GM10248 (cell line): ENCODE measurements at regions of chr12 and their contacts with region 1.

Region 1: DNA sequence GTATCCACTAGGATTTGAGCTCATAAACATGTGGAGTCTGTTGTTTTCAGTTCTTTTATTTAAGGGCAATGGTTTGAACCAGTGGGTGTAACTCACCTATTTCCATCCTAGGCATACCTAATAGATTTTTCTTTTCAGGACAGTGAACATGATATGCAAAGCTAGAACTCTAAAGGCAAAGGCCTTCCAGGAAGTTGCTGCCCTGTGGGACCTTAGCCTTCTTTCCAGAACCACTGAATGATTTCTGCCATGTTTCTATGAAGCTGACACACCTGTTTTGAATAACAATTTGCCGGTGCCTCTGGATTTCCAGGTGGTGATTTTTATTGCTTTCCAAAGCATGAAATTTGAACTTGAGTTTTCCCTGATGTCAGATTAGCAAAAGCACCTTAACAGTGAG is 372.9 kb upstream of the FAR2 start:
- DNase-seq: no peak
- CTCF ChIP-seq: no peak

Region 2: GRCh38 chr12:28759312-28759751 is 16.9 kb before region 1 on chr12:
- CTCF ChIA-PET with region 1: no interaction called
- POLR2A ChIA-PET with region 1: no interaction called
- DNase-seq: no peak
- CTCF ChIP-seq: no peak

Region 3: GRCh38 chr12:28787151-28787550 is 10.9 kb after region 1 on chr12:
- CTCF ChIA-PET with region 1: interaction called, 10 read pairs
- POLR2A ChIA-PET with region 1: no interaction called
- DNase-seq: no peak
- CTCF ChIP-seq: no peak

Region 4: GRCh38 chr12:28824849-28825248 is 48.6 kb after region 1 on chr12:
- CTCF ChIA-PET with region 1: no interaction called
- POLR2A ChIA-PET with region 1: no interaction called
- DNase-seq: no peak
- CTCF ChIP-seq: no peak

Region 5: GRCh38 chr12:29103539-29103974 is 327.3 kb after region 1 on chr12:
- CTCF ChIA-PET with region 1: no interaction called
- POLR2A ChIA-PET with region 1: no interaction called
- DNase-seq: peak; percentile 36
- CTCF ChIP-seq: no peak